Activated CD4-positive, alpha-beta memory T cell treated with anti-CD3 and anti-CD28 coated beads for 36 hours (primary cell): ENCODE measurements at regions of chr1 and their contacts with region 1.

Region 1: DNA sequence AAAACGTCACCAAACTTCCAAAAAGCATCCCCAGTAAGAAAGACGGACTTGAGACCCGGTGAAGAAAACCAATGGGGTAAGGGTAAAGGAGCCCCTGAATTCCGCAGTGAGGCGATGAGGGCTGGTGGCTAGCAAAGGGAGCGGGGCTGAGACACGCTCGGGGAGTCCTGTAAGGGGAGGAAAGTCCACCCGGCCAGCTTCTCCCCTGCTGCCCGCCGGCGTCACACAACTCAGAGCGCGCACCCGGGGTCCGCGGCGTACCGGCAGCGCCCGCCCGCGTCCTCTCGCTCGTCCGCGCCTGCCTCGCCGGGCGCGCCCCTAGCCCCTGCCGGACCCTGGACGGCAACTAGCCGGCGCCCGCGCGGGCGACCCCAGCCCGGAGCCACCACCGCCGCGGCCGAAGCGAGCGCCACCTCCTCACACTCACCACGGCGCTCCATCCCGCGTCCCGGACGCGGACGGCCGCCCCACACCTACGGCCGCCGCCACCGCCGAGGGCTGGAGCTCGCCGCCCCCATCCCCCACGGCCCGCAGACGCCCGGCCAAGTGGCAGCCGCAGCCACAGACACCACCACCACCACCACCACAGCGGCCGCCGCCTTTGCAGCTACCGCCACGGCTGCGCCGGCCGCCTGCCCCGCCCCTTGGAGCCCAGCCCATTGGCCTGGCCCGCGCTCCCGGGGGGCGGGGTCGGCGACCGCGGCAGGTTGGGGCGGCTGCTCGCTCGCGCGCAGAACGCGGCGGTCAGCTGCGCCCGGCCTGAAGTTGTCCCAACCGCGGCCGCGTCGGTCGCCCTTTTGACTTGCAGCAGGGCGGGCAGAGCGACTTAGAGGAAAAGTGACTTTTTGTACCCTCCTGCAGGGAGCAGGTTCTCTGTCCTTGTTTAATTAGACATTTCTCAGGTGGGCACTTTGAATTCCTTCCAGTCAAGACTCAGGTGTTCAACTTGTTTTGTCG is 10.0 kb upstream of the ARHGAP29 start:
- DNase-seq: peak; percentile 36
- H3K4me3 Mint-ChIP-seq: peak overlapping the region; percentile 73
- H3K27ac Mint-ChIP-seq: no peak overlapping the region
- H3K4me1 Mint-ChIP-seq: peaks cover 10% of the 10 kb centered on the region
- H3K27me3 Mint-ChIP-seq: peaks cover 41% of the 10 kb centered on the region

Region 2: GRCh38 chr1:94325379-94326302 is 78.2 kb after region 1 on chr1:
- CTCF ChIA-PET with region 1: no interaction called
- POLR2A ChIA-PET with region 1: no interaction called
- intact Hi-C with region 1: no loop called
- DNase-seq: no peak
- H3K4me3 Mint-ChIP-seq: no peak overlapping the region
- H3K27ac Mint-ChIP-seq: no peak overlapping the region
- H3K4me1 Mint-ChIP-seq: no peaks in the 10 kb centered on the region
- H3K27me3 Mint-ChIP-seq: peaks cover 33% of the 10 kb centered on the region

Region 3: GRCh38 chr1:94383966-94384408 is 136.6 kb after region 1 on chr1:
- CTCF ChIA-PET with region 1: no interaction called
- POLR2A ChIA-PET with region 1: no interaction called
- intact Hi-C with region 1: loop called (anchors 1 kb)
- DNase-seq: peak; percentile 16
- H3K4me3 Mint-ChIP-seq: no peak overlapping the region
- H3K27ac Mint-ChIP-seq: peak overlapping the region; percentile 29
- H3K4me1 Mint-ChIP-seq: peaks cover 21% of the 10 kb centered on the region
- H3K27me3 Mint-ChIP-seq: peaks cover 9% of the 10 kb centered on the region